ENCODE measurements at regions of chr11 and their contacts with region 1.

Region 1: GRCh38 chr11:16605894-16606783 is 132.3 kb upstream of the C11orf58 start:
- DNase-seq: peak; percentile 87
- H3K4me3 ChIP-seq: peak overlapping the region; percentile 65
- H3K27ac ChIP-seq: peak overlapping the region; percentile 89
- H3K27me3 ChIP-seq: peaks cover 16% of the 10 kb centered on the region
- CTCF ChIP-seq: peak; percentile 97

Region 2: GRCh38 chr11:15975742-15976141 is 630.4 kb before region 1 on chr11:
- CTCF ChIA-PET with region 1: interaction called, 10 read pairs
- POLR2A ChIA-PET with region 1: no interaction called
- DNase-seq: no peak
- H3K4me3 ChIP-seq: no peak overlapping the region
- H3K27ac ChIP-seq: no peak overlapping the region
- H3K27me3 ChIP-seq: no peaks in the 10 kb centered on the region
- CTCF ChIP-seq: no peak

Region 3: GRCh38 chr11:16382638-16383380 is 223.3 kb before region 1 on chr11:
- CTCF ChIA-PET with region 1: interaction called, 3 read pairs
- POLR2A ChIA-PET with region 1: interaction called, 26 read pairs
- DNase-seq: peak; percentile 63
- H3K4me3 ChIP-seq: no peak overlapping the region
- H3K27ac ChIP-seq: peak overlapping the region; percentile 54
- H3K27me3 ChIP-seq: no peaks in the 10 kb centered on the region
- CTCF ChIP-seq: no peak

Measured in AG04450 (cell line).